B cell (primary cell): ENCODE measurements at regions of chr16 and their contacts with region 1.

Region 1: GRCh38 chr16:4506450-4506849 is 30.3 kb downstream of the HMOX2 start:
- DNase-seq: peak; percentile 83
- ATAC-seq: no peak
- H3K4me3 ChIP-seq: no peak overlapping the region
- H3K4me3 Mint-ChIP-seq: peak overlapping the region; percentile 56
- H3K27ac ChIP-seq: peak overlapping the region; percentile 96
- H3K27ac Mint-ChIP-seq: peak overlapping the region; percentile 98
- H3K4me1 ChIP-seq: peaks cover 37 to 41% of the 10 kb centered on the region in 2 donors
- H3K4me1 Mint-ChIP-seq: peaks cover 37% of the 10 kb centered on the region
- H3K27me3 ChIP-seq: no peaks in the 10 kb centered on the region
- H3K27me3 Mint-ChIP-seq: no peaks in the 10 kb centered on the region
- CTCF ChIP-seq: peak; percentile 87

Region 2: DNA sequence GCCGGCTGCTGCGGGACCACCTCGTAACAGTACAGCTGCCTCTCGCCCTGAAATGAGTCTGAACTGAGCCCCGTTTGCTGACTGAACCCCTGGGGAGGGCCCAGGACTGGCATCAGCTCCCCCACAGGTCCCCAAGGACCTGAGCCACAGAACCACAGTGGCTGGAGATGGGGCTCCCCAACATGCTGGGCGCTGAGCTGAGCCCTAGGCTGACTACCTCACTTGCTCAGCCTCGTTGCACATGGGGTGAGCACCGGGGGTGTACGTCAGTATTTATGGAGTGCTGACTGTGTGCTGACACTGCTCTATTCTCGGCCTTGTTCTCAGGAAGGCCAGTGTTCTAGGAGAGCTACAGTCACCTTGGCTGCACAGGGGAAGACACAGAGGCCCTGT is 141.4 kb before region 1 on chr16:
- CTCF ChIA-PET with region 1: no interaction called
- POLR2A ChIA-PET with region 1: interaction called, 3 read pairs
- intact Hi-C with region 1: loop called (anchors 1 kb)
- DNase-seq: peak; percentile 86
- ATAC-seq: peak; percentile 89
- H3K4me3 ChIP-seq: no peak overlapping the region
- H3K4me3 Mint-ChIP-seq: peak overlapping the region; percentile 64
- H3K27ac ChIP-seq: peak overlapping the region; percentile 27 to 37
- H3K27ac Mint-ChIP-seq: peak overlapping the region; percentile 78
- H3K4me1 ChIP-seq: peaks cover 6 to 42% of the 10 kb centered on the region in 2 donors
- H3K4me1 Mint-ChIP-seq: peaks cover 25% of the 10 kb centered on the region
- H3K27me3 ChIP-seq: no peaks in the 10 kb centered on the region
- H3K27me3 Mint-ChIP-seq: no peaks in the 10 kb centered on the region
- CTCF ChIP-seq: no peak

Region 3: DNA sequence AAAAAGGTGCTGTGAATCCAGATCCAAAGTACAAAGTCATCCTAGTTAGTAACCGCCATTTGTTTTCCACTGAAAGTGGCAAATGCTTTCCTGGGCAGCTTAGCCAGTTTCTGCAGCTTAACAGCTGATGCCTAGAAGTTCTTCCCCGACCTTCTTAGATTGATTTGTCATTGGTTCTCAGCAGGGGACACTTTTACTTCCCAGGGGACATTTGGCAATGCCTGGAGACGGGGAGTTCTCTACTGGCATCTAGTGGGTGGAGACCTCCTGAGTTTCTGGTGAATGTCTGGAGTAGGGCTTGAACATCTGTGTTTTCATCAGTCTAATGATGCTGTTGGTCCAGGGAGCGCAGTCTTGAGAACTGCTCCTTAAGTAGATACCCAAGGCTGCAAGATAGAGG is 73.2 kb before region 1 on chr16:
- CTCF ChIA-PET with region 1: no interaction called
- POLR2A ChIA-PET with region 1: no interaction called
- intact Hi-C with region 1: no loop called
- DNase-seq: no peak
- ATAC-seq: no peak
- H3K4me3 ChIP-seq: no peak overlapping the region
- H3K4me3 Mint-ChIP-seq: no peak overlapping the region
- H3K27ac ChIP-seq: no peak overlapping the region
- H3K27ac Mint-ChIP-seq: no peak overlapping the region
- H3K4me1 ChIP-seq: no peaks in the 10 kb centered on the region
- H3K4me1 Mint-ChIP-seq: peaks cover 3% of the 10 kb centered on the region
- H3K27me3 ChIP-seq: no peaks in the 10 kb centered on the region
- H3K27me3 Mint-ChIP-seq: no peaks in the 10 kb centered on the region
- CTCF ChIP-seq: no peak

Region 4: GRCh38 chr16:4461250-4462085 is 45.0 kb before region 1 on chr16:
- CTCF ChIA-PET with region 1: interaction called, 5 read pairs
- POLR2A ChIA-PET with region 1: interaction called, 10 read pairs
- intact Hi-C with region 1: no loop called
- DNase-seq: no peak
- ATAC-seq: no peak
- H3K4me3 ChIP-seq: no peak overlapping the region
- H3K4me3 Mint-ChIP-seq: no peak overlapping the region
- H3K27ac ChIP-seq: no peak overlapping the region
- H3K27ac Mint-ChIP-seq: no peak overlapping the region
- H3K4me1 ChIP-seq: no peaks in the 10 kb centered on the region
- H3K4me1 Mint-ChIP-seq: no peaks in the 10 kb centered on the region
- H3K27me3 ChIP-seq: no peaks in the 10 kb centered on the region
- H3K27me3 Mint-ChIP-seq: no peaks in the 10 kb centered on the region
- CTCF ChIP-seq: no peak

Region 5: GRCh38 chr16:4538350-4539235 is 32.1 kb after region 1 on chr16 and contains the start of gene CDIP1:
- CTCF ChIA-PET with region 1: interaction called, 18 read pairs
- POLR2A ChIA-PET with region 1: no interaction called
- intact Hi-C with region 1: loop called (anchors 1 kb)
- DNase-seq: peak; percentile 99
- ATAC-seq: peak; percentile 91
- H3K4me3 ChIP-seq: peak within 1 kb of the TSS; percentile 7 to 93 (median 73)
- H3K4me3 Mint-ChIP-seq: peak within 1 kb of the TSS; percentile 92
- H3K27ac ChIP-seq: peak within 1 kb of the TSS; percentile 87 to 95
- H3K27ac Mint-ChIP-seq: peak within 1 kb of the TSS; percentile 96
- H3K4me1 ChIP-seq: peaks cover 7 to 13% of the 10 kb centered on the region in 2 donors
- H3K4me1 Mint-ChIP-seq: peaks cover 14% of the 10 kb centered on the region
- H3K27me3 ChIP-seq: no peaks in the 10 kb centered on the region
- H3K27me3 Mint-ChIP-seq: no peaks in the 10 kb centered on the region
- CTCF ChIP-seq: peak; percentile 24
- total RNA-seq, gene CDIP1: 18.0 and 20.3 TPM in 2 replicates

Region 6: DNA sequence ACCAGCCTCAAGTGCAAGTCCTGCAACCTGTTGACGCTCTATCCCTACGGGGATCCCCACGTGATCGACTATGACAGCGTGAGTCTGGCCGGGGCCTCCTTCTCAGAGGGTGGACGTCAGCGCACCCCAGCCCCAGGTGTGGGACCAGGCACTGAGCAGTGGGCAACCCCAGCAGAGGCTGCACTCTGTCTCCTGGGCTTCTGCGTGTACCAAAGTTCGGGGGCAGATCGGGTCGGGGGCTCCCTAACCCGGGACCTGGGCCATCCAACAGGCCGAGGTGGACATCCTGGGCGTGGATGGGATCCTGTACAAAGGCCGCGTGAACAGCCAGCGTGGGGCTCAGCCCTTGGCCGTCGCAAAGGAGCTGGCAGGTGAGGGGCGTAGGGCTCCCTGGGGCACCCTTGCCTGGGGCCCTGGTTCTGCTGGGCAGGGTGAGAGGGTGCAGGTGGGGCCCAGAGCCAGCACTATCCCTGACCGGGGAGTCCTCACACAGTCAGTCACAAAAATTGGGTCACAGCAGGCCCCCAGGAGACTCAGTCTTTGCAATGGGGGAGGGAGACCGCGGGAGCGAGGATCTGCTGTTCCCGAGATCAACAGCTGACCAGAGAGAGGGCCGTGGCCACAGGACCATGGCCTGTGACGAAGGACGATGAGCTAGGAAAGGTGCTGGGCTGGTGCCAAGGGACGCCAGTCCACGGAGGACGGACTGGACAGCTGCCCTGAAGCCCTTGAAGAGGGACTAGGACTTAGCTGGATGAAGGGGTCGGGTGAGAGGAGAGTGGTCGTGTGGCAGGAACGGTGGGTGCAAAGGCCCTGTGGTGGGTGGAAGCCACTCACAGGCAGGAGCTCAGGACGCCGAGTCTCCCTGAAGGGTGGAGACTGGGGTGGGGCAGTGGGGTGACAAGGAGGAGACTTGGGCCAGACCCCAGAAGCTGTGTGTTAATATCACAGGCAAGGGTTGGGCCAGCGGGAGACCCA is 88.3 kb after region 1 on chr16:
- CTCF ChIA-PET with region 1: no interaction called
- POLR2A ChIA-PET with region 1: interaction called, 12 read pairs
- intact Hi-C with region 1: no loop called
- DNase-seq: no peak
- ATAC-seq: no peak
- H3K4me3 ChIP-seq: no peak overlapping the region
- H3K4me3 Mint-ChIP-seq: no peak overlapping the region
- H3K27ac ChIP-seq: no peak overlapping the region
- H3K27ac Mint-ChIP-seq: no peak overlapping the region
- H3K4me1 ChIP-seq: no peaks in the 10 kb centered on the region
- H3K4me1 Mint-ChIP-seq: no peaks in the 10 kb centered on the region
- H3K27me3 ChIP-seq: no peaks in the 10 kb centered on the region
- H3K27me3 Mint-ChIP-seq: peaks cover 4% of the 10 kb centered on the region
- CTCF ChIP-seq: no peak

Region 7: DNA sequence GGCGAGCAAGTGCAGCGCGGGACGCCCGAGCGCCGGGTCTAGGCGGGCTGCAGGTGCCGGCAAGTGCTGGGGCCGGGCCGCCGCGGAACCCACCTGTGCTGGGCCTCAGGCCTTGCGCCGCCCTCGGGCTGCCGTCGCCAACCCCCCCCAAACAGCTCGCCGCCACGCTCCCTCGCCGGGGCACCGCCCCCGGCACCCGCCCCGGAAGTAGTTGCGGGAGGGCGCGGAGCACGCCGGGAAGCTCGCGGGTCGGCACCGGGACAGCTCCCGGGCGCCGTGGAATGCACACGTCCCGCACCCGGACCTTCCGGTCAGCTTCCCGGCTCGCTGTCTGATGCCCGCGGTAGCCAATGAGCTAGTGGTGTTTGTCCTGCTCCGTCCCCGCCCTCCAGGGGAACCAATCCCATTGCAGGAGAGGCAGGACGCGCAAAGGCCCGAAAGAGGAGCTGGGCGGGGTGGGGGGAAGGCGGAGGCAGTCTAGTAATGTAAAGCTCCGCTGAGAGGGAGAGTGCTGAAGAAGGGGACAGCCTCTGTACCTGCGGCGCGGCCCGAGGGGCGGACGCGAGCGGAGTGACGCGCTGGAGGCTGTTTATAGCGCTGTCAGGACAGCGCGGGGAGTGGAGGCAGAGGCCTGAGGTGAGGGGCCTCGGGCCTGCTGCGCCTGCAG is 227.7 kb after region 1 on chr16 and contains the starts of genes ANKS3 and DNAAF8:
- CTCF ChIA-PET with region 1: no interaction called
- POLR2A ChIA-PET with region 1: interaction called, 3 read pairs
- intact Hi-C with region 1: loop called (anchors 1 kb)
- DNase-seq: peak; percentile 89
- ATAC-seq: peak; percentile 80
- H3K4me3 ChIP-seq: peak within 1 kb of the TSS; percentile 79 to 98 (median 91)
- H3K4me3 Mint-ChIP-seq: peak within 1 kb of the TSS; percentile 90
- H3K27ac ChIP-seq: peak within 1 kb of the TSS; percentile 35 to 89
- H3K27ac Mint-ChIP-seq: peak within 1 kb of the TSS; percentile 89
- H3K4me1 ChIP-seq: peaks cover 10 to 13% of the 10 kb centered on the region in 2 donors
- H3K4me1 Mint-ChIP-seq: peaks cover 17% of the 10 kb centered on the region
- H3K27me3 ChIP-seq: no peaks in the 10 kb centered on the region
- H3K27me3 Mint-ChIP-seq: no peaks in the 10 kb centered on the region
- CTCF ChIP-seq: no peak
- total RNA-seq, gene ANKS3: 31.9 and 36.2 TPM in 2 replicates
- total RNA-seq, gene DNAAF8: 0.19 and 0.44 TPM in 2 replicates

Region 8: DNA sequence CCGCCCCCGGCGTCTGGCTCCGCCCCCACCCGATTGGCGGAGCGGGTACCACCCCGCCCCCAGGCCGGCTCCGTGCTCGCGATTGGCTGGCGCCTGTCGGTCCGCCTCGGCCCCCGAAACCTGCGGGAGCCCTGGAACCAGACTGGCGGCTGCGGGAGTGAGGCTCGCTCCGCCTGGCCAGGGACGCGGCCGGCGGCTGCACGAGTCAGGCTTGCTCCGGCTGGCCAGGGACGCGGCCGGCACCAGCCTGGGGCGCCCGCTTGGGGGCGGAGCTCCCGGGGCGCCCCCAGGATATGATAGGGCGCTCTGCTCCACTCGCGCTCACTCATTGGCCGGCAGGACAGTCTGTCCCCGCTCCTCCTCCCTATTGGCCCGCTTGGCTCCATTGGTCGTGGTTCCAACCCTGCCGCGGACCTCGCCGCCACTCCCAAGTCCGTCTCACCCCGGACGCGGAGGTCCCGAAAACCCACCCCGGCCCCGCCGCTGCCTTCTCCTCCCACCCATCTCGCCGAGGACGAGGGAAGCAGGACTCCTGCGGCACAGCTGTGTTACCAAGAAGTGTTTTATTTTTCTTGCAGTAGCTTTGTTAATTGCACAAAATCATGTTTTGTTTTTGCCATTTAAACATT is 296.3 kb after region 1 on chr16:
- CTCF ChIA-PET with region 1: no interaction called
- POLR2A ChIA-PET with region 1: no interaction called
- intact Hi-C with region 1: no loop called
- DNase-seq: peak; percentile 95
- ATAC-seq: peak; percentile 86
- H3K4me3 ChIP-seq: peak overlapping the region; percentile 13 to 88 (median 75)
- H3K4me3 Mint-ChIP-seq: peak overlapping the region; percentile 88
- H3K27ac ChIP-seq: peak overlapping the region; percentile 47 to 77
- H3K27ac Mint-ChIP-seq: peak overlapping the region; percentile 84
- H3K4me1 ChIP-seq: peaks cover 26 to 27% of the 10 kb centered on the region in 2 donors
- H3K4me1 Mint-ChIP-seq: peaks cover 21% of the 10 kb centered on the region
- H3K27me3 ChIP-seq: no peaks in the 10 kb centered on the region
- H3K27me3 Mint-ChIP-seq: no peaks in the 10 kb centered on the region
- CTCF ChIP-seq: no peak